ENCODE measurements at regions of chr3 and their contacts with region 1.

Region 1: DNA sequence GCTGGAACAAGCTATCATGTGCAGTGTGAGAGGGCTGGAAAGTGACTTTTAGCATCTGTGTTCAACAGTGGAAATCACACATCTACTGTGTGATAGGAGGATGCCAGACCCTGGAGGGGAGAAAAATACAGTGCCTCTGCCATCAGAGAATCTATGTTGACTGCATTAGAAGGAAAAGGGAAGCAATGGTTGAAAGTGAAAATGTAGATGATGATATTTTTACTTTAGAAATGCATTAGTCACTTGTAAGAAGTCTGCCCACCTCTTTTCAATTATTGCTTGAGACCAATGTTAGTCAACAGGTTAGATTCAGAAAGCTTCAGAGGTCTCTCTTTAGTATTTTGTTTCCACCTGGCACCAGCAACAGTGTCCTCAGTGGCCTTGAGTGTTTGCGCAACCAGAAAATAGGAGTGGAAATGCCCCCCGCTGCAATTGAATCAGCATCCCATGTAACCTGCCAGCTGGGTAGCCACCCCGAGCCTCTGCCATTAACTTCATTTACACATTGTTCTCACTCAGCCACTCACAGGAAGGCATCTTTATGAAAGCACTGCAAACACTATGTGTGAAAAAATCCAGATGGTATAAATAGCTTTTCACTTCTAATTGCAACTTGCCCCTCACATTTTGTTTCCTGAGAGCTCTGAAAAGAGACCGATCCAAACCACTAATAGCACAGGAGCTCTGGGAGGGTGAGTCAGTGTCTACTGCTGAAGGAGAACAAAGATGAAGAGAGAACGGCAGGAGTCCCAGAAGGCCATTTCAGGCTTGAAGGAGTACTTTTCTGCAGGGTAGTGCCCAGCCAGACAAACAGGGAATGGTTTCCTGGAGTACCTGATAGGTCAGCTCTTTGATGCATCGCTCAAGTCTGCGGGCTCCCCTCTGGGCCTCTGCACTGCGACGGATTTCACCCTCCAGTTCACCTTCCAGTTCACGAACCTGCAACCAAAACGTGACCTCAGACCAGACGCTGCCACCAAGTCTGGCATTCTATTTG is 92.1 kb downstream of the HHLA2 start:
- DNase-seq: peak; percentile 17
- H3K4me3 Mint-ChIP-seq: no peak overlapping the region
- H3K27ac Mint-ChIP-seq: no peak overlapping the region
- H3K4me1 Mint-ChIP-seq: peaks cover 19% of the 10 kb centered on the region
- H3K27me3 Mint-ChIP-seq: peaks cover 14% of the 10 kb centered on the region

Region 2: GRCh38 chr3:108342837-108343478 is 45.5 kb before region 1 on chr3:
- CTCF ChIA-PET with region 1: interaction called, 4 read pairs
- intact Hi-C with region 1: loop called (anchors 2 kb)
- DNase-seq: no peak
- H3K4me3 Mint-ChIP-seq: no peak overlapping the region
- H3K27ac Mint-ChIP-seq: no peak overlapping the region
- H3K4me1 Mint-ChIP-seq: peaks cover 13% of the 10 kb centered on the region
- H3K27me3 Mint-ChIP-seq: no peaks in the 10 kb centered on the region

Region 3: DNA sequence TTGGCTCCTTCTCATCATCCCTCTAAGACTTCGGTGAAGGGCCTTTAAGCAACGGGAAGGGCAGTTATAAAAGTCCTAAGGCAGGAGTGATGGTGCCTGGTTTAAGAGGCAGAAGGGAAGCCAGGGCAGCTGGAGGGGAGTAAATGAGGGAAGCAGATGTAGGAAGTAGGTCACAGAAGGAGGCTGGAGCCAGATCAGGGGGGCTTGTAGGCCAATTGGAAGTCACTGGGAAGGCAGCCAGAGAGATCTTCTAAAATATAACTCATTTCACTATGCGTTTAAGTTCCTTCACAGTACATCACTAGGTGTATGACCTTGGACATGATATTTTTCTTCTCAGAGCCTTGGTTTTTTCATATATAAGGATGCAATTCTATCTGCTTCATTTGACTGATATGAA is 27.2 kb after region 1 on chr3:
- CTCF ChIA-PET with region 1: no interaction called
- intact Hi-C with region 1: loop called (anchors 1 kb)
- DNase-seq: no peak
- H3K4me3 Mint-ChIP-seq: no peak overlapping the region
- H3K27ac Mint-ChIP-seq: no peak overlapping the region
- H3K4me1 Mint-ChIP-seq: peaks cover 18% of the 10 kb centered on the region
- H3K27me3 Mint-ChIP-seq: peaks cover 12% of the 10 kb centered on the region

Region 4: DNA sequence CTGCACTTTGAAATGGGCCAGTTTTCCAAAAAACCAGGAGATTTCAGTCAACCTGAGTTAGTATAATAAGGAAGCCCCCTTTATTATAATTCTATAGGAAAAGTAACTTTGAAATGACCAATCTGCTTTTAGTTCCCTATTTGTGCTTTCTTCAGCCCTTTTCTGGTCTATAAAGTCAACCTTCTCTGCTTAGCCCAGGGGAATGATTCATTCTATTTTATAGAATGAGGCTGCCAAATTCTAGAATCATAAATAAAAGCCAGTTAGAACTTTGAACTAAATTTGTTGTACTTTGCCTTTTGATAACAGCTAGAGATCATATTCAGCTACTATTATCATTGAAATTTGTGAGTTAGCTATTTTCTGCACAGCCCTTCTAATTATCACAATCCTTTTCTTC is 176.1 kb after region 1 on chr3:
- CTCF ChIA-PET with region 1: no interaction called
- intact Hi-C with region 1: no loop called
- DNase-seq: no peak
- H3K4me3 Mint-ChIP-seq: no peak overlapping the region
- H3K27ac Mint-ChIP-seq: no peak overlapping the region
- H3K4me1 Mint-ChIP-seq: no peaks in the 10 kb centered on the region
- H3K27me3 Mint-ChIP-seq: no peaks in the 10 kb centered on the region

Region 5: GRCh38 chr3:108602249-108602934 is 214.0 kb after region 1 on chr3:
- CTCF ChIA-PET with region 1: no interaction called
- intact Hi-C with region 1: no loop called
- DNase-seq: peak; percentile 72
- H3K4me3 Mint-ChIP-seq: peak overlapping the region; percentile 26
- H3K27ac Mint-ChIP-seq: peak overlapping the region; percentile 62
- H3K4me1 Mint-ChIP-seq: peaks cover 52% of the 10 kb centered on the region
- H3K27me3 Mint-ChIP-seq: no peaks in the 10 kb centered on the region